ENCODE measurements at regions of chr10 and their contacts with region 1.

Region 1: GRCh38 chr10:30897547-30897946 is 134.1 kb downstream of the ZNF438 start:
- DNase-seq: no peak
- ATAC-seq: no peak
- H3K4me3 ChIP-seq: no peak overlapping the region
- H3K27ac ChIP-seq: no peak overlapping the region
- H3K4me1 ChIP-seq: peaks cover 0 to 3% of the 10 kb centered on the region in 2 donors
- H3K27me3 ChIP-seq: no peaks in the 10 kb centered on the region
- CTCF ChIP-seq: no peak
- POLR2A ChIP-seq: no peak

Region 2: GRCh38 chr10:30935078-30935477 is 37.5 kb after region 1 on chr10:
- in situ Hi-C with region 1: no loop called
- intact Hi-C with region 1: loop called (anchors 5 kb)
- DNase-seq: no peak
- ATAC-seq: peak; percentile 46 to 58
- H3K4me3 ChIP-seq: no peak overlapping the region
- H3K27ac ChIP-seq: peak overlapping the region; percentile 32 to 58 (median 38)
- H3K4me1 ChIP-seq: peaks cover 12 to 14% of the 10 kb centered on the region in 2 donors
- H3K27me3 ChIP-seq: no peaks in the 10 kb centered on the region
- CTCF ChIP-seq: no peak
- POLR2A ChIP-seq: no peak